GM12878 (cell line): ENCODE measurements at regions of chr1 and their contacts with region 1.

Region 1: DNA sequence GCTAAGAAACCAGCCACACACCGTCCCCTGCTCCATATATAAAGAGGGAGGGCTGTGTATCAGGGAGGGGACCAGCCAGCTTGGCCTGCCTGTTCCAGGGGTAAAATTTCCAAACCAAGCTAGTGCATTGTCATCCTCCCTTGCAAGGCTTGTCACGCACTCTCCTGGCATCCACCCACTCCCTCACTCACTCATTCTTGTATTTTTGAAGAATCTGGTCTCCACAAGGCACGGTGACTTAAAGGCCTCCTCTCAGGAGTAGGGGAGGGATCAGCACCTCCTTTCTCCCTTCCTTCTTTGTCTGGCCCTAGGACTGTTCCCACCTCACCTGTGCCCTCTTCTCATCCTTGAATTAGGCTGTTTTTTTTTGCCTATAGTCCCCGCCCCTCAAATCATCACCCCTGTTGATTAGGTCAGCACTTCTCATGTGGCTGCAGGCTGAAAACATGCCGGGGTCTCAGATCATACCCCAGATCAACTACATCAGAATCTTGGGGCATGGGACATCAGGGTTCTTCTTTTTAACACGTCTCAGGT is 5.0 kb downstream of the ABCA4 start:
- DNase-seq: no peak
- ATAC-seq: no peak
- H3K4me3 ChIP-seq: no peak overlapping the region
- H3K27ac ChIP-seq: no peak overlapping the region
- H3K4me1 ChIP-seq: 0 out of 2 replicates have a peak, but pooled peaks cover 4% of the 10 kb centered on the region
- H3K27me3 ChIP-seq: peaks cover 0 to 11% of the 10 kb centered on the region in 2 experiments; a peak in 2 of 4 replicates
- CTCF ChIP-seq: no peak
- EP300 ChIP-seq: no peak
- POLR2A ChIP-seq: no peak
- RAD21 ChIP-seq: no peak

Region 2: DNA sequence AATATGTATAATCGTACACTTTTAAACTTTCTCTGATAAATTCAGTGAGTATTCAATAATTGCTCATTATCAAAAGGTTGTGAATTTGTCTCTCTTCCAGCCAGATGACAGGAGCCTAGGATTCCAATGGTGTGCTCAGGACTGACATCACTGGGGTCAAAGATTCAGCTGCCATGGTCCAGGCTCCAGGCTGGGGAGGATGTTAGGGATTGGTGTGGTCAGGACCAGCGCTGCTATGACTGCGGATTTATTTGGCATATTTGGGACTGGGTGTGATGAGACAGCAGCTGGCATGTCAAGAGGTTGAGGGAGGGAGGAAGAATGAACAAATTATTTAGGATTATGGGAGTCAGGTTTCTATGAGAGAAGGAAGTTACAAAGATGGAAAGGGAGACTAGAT is 53.2 kb after region 1 on chr1:
- CTCF ChIA-PET with region 1: no interaction called
- POLR2A ChIA-PET with region 1: no interaction called
- RAD21 ChIA-PET with region 1: no interaction called
- SMC1A ChIA-PET with region 1: no interaction called
- in situ Hi-C with region 1: loop called (anchors 5 kb)
- intact Hi-C with region 1: no loop called
- DNase-seq: no peak
- ATAC-seq: no peak
- H3K4me3 ChIP-seq: no peak overlapping the region
- H3K27ac ChIP-seq: no peak overlapping the region
- H3K4me1 ChIP-seq: no peaks in the 10 kb centered on the region
- H3K27me3 ChIP-seq: no peaks in the 10 kb centered on the region
- CTCF ChIP-seq: no peak
- EP300 ChIP-seq: no peak
- POLR2A ChIP-seq: no peak
- RAD21 ChIP-seq: no peak